Sciatic nerve (tissue), 2 donors: ENCODE measurements at regions of chr11 and their contacts with region 1.

Region 1: GRCh38 chr11:12235947-12236743 is 125.8 kb downstream of the MICAL2 start:
- DNase-seq: no peak
- ATAC-seq: peak; percentile 42

Region 2: GRCh38 chr11:12090061-12090591 is 146.0 kb before region 1 on chr11:
- intact Hi-C with region 1: loop called (anchors 10 kb)
- DNase-seq: no peak
- ATAC-seq: no peak